ENCODE measurements at regions of chr9 and their contacts with region 1.

Region 1: GRCh38 chr9:68482548-68482947 is 58.1 kb downstream of the TMEM252 start:
- DNase-seq: no peak
- H3K4me3 ChIP-seq: no peak overlapping the region
- H3K27ac ChIP-seq: no peak overlapping the region
- H3K4me1 ChIP-seq: no peaks in the 10 kb centered on the region
- CTCF ChIP-seq: no peak

Region 2: GRCh38 chr9:68437785-68438184 is 44.8 kb before region 1 on chr9:
- CTCF ChIA-PET with region 1: no interaction called
- POLR2A ChIA-PET with region 1: interaction called, 4 read pairs
- intact Hi-C with region 1: loop called (anchors 2 kb)
- DNase-seq: no peak
- H3K4me3 ChIP-seq: no peak overlapping the region
- H3K27ac ChIP-seq: no peak overlapping the region
- H3K4me1 ChIP-seq: no peaks in the 10 kb centered on the region
- CTCF ChIP-seq: no peak

Measured in OCI-LY7 (cell line).